Stomach (tissue), 19 donors: ENCODE measurements at regions of chr19 and their contacts with region 1.

Region 1: GRCh38 chr19:17201913-17202648 is 13.1 kb upstream of the USE1 start:
- DNase-seq: no peak
- H3K4me3 ChIP-seq: no peak overlapping the region
- H3K27ac ChIP-seq: no peak overlapping the region
- H3K4me1 ChIP-seq: no peaks in the 10 kb centered on the region
- H3K27me3 ChIP-seq: no peaks in the 10 kb centered on the region
- CTCF ChIP-seq: no peak
- EP300 ChIP-seq: no peak
- POLR2A ChIP-seq: no peak

Region 2: GRCh38 chr19:17282488-17283255 is 80.6 kb after region 1 on chr19:
- intact Hi-C with region 1: loop called (anchors 5 kb)
- DNase-seq: peak; percentile 93 to 94
- H3K4me3 ChIP-seq: peak overlapping the region; percentile 31 to 54 (median 42)
- H3K27ac ChIP-seq: no peak overlapping the region
- H3K4me1 ChIP-seq: peaks cover 12 to 20% (median 16%) of the 10 kb centered on the region in 4 donors
- H3K27me3 ChIP-seq: peaks cover 3 to 27% (median 15%) of the 10 kb centered on the region in 3 donors
- CTCF ChIP-seq: peak in 5 of 7 experiments; percentile 83 to 95 (median 92)
- EP300 ChIP-seq: no peak
- POLR2A ChIP-seq: no peak